Prostate gland (tissue), 2 donors: ENCODE measurements at regions of chr12 and their contacts with region 1.

Region 1: GRCh38 chr12:42589465-42590329 is at the start of gene PRICKLE1:
- DNase-seq: no peak
- H3K4me3 ChIP-seq: peak within 1 kb of the TSS; percentile 48 to 53
- H3K27ac ChIP-seq: peak within 1 kb of the TSS; percentile 40 to 65
- H3K4me1 ChIP-seq: no peaks in the 10 kb centered on the region
- H3K27me3 ChIP-seq: no peaks in the 10 kb centered on the region
- CTCF ChIP-seq: no peak
- POLR2A ChIP-seq: no peak
- total RNA-seq, gene PRICKLE1: 7.5 to 12.4 TPM

Region 2: DNA sequence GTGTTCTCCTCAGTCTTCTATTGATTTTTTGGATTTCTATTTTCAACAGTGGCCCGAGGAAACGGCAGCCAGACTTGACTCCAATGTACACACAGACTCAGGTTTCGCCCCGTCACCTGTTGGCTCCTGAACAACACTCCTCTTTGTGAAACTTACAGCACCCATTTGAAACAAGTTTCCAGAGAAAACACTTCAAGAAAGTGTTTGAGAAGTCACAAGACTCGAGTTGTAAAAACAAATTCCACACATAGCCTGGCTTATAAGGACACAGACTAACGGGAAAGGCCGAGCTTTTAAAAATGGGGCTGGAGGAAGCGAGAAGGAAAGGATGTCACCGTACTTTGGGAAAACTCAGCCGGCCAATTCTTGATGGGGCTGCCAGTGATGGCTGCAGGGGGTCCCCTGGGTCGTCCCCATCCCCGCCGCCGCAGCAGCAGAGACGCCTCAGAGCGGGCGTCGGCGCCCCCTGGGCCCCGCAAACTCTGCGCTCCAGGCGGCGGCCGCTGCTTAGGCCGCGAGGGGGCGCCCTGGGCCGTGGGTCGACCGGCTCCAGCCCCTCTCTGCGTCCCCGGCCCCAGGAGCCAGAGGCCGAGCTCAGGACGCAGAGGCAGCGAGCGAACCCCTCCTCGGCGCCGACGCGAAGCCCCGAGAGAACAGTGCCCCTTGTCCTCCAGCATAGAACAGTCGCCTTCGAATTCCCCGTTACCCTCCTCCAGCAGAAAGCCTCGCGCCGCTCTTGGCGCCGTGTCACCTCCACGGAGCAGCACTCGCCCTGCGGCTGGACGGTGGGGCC is 107.1 kb before region 1 on chr12:
- intact Hi-C with region 1: loop called (anchors 5 kb)
- DNase-seq: peak; percentile 77
- H3K4me3 ChIP-seq: peak overlapping the region; percentile 55 to 59
- H3K27ac ChIP-seq: peak overlapping the region; percentile 64 to 76
- H3K4me1 ChIP-seq: no peaks in the 10 kb centered on the region
- H3K27me3 ChIP-seq: no peaks in the 10 kb centered on the region
- CTCF ChIP-seq: peak; percentile 65 to 91 (median 86)
- POLR2A ChIP-seq: no peak

Region 3: GRCh38 chr12:42921741-42922504 is 332.2 kb after region 1 on chr12:
- intact Hi-C with region 1: loop called (anchors 10 kb)
- DNase-seq: peak; percentile 61
- H3K4me3 ChIP-seq: no peak overlapping the region
- H3K27ac ChIP-seq: no peak overlapping the region
- H3K4me1 ChIP-seq: peaks cover 9% of the 10 kb centered on the region
- H3K27me3 ChIP-seq: no peaks in the 10 kb centered on the region
- CTCF ChIP-seq: no peak
- POLR2A ChIP-seq: no peak

Region 4: DNA sequence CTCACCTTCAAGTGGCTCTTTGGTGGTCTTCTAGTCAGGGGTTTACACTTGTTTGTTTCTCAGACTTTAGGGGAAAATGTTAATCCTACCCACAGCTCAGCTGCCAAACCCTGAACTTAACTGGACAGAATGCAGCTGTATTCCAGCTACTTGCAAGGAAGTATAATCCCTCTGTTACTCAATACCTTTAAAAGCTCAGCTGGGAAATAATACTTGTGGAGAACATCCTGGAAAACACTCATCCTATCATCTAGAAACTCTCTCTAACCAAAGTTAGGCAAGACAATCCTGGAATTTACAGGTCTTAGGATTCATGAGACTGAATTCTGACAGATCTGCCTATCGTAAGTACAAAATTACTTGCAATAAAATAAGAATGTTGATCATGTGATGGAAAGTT is 558.2 kb after region 1 on chr12:
- intact Hi-C with region 1: loop called (anchors 10 kb)
- DNase-seq: no peak
- H3K4me3 ChIP-seq: no peak overlapping the region
- H3K27ac ChIP-seq: no peak overlapping the region
- H3K4me1 ChIP-seq: no peaks in the 10 kb centered on the region
- H3K27me3 ChIP-seq: no peaks in the 10 kb centered on the region
- CTCF ChIP-seq: no peak
- POLR2A ChIP-seq: no peak

Region 5: GRCh38 chr12:43282106-43282505 is 692.4 kb after region 1 on chr12:
- intact Hi-C with region 1: loop called (anchors 2 kb)
- DNase-seq: no peak
- H3K4me3 ChIP-seq: no peak overlapping the region
- H3K27ac ChIP-seq: no peak overlapping the region
- H3K4me1 ChIP-seq: no peaks in the 10 kb centered on the region
- H3K27me3 ChIP-seq: no peaks in the 10 kb centered on the region
- CTCF ChIP-seq: peak in 2 of 4 experiments; percentile 41 to 43
- POLR2A ChIP-seq: no peak

Region 6: GRCh38 chr12:43338848-43339526 is 749.3 kb after region 1 on chr12:
- intact Hi-C with region 1: loop called (anchors 5 kb)
- DNase-seq: no peak
- H3K4me3 ChIP-seq: no peak overlapping the region
- H3K27ac ChIP-seq: no peak overlapping the region
- H3K4me1 ChIP-seq: no peaks in the 10 kb centered on the region
- H3K27me3 ChIP-seq: no peaks in the 10 kb centered on the region
- CTCF ChIP-seq: peak in 2 of 4 experiments; percentile 54 to 57
- POLR2A ChIP-seq: no peak